PC-9 (cell line): ENCODE measurements at regions of chr3 and their contacts with region 1.

Region 1: GRCh38 chr3:15113463-15113862 is 14.5 kb upstream of the RBSN start:
- DNase-seq: no peak
- H3K4me3 ChIP-seq: no peak overlapping the region
- H3K27ac ChIP-seq: no peak overlapping the region
- H3K4me1 ChIP-seq: no peaks in the 10 kb centered on the region
- H3K27me3 ChIP-seq: peaks cover 11% of the 10 kb centered on the region; the same call in 1 of the 2 replicates
- CTCF ChIP-seq: no peak

Region 2: DNA sequence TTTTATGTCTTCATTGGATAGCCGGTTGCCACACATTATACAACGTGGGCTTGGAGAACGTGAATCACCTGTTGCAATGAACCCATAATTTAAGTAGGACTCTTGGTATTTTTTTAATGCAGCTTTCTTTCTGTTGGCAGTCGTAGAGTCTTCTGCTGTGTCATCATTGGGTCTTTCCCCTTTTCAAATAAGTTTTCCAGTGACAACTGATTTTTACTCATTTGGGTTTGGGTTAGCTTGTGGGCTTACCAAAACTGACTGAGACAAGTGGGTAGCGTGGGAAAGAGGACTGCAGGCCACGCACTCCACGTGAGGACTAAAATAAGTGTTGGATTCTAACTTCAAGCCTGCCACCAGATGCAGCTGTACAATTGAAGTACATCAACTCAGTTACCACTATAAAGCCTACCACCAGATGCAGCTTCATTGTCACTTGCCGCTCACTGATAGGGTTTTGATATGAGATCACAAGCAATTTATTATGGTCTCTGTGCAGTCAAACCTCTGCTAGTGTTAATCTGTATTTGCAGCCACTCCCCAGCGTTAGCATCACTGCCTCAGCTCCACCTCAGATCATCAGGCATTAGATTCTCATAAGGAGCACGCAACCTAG is 86.1 kb after region 1 on chr3:
- CTCF ChIA-PET with region 1: no interaction called
- POLR2A ChIA-PET with region 1: no interaction called
- intact Hi-C with region 1: no loop called
- DNase-seq: no peak
- H3K4me3 ChIP-seq: no peak overlapping the region
- H3K27ac ChIP-seq: no peak overlapping the region
- H3K4me1 ChIP-seq: no peaks in the 10 kb centered on the region
- H3K27me3 ChIP-seq: 0 out of 2 replicates have a peak, but pooled peaks cover 3% of the 10 kb centered on the region
- CTCF ChIP-seq: no peak

Region 3: GRCh38 chr3:15405448-15406050 is 292.1 kb after region 1 on chr3:
- CTCF ChIA-PET with region 1: no interaction called
- POLR2A ChIA-PET with region 1: no interaction called
- intact Hi-C with region 1: loop called (anchors 10 kb)
- DNase-seq: no peak
- H3K4me3 ChIP-seq: no peak overlapping the region
- H3K27ac ChIP-seq: no peak overlapping the region
- H3K4me1 ChIP-seq: peaks cover 8% of the 10 kb centered on the region; the same call in 1 of the 2 replicates
- H3K27me3 ChIP-seq: no peaks in the 10 kb centered on the region
- CTCF ChIP-seq: peak; percentile 84